GM12878 (cell line): ENCODE measurements at regions of chr3 and their contacts with region 1.

Region 1: DNA sequence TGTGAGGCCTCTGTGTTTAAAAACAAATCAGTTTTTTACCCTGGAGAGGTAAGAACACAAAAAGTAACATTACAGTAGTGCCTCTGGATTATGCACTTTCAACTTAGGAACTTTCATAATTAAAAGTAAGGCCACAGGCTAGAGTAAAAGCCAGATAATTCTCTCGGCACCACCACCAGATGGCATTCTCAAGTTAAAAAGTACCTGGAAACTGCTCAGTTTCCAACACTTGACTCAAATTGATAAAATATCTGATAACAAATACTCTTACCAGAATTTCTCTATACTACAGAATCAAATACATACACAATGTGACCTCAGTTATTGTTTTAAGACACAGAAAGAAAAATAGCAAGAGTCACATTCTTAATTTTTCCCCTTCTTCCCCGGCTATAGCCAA is 19.9 kb downstream of the SPICE1 start:
- DNase-seq: no peak
- ATAC-seq: peak; percentile 96
- H3K4me3 ChIP-seq: no peak overlapping the region
- H3K27ac ChIP-seq: no peak overlapping the region
- H3K4me1 ChIP-seq: no peaks in the 10 kb centered on the region; the same call in 1 of the 2 replicates
- H3K27me3 ChIP-seq: no peaks in the 10 kb centered on the region
- CTCF ChIP-seq: peak; percentile 45 to 67 (median 50); a peak in 4 of 6 replicates
- EP300 ChIP-seq: no peak
- POLR2A ChIP-seq: no peak
- RAD21 ChIP-seq: peak; percentile 71

Region 2: GRCh38 chr3:113249111-113249510 is 245.9 kb before region 1 on chr3:
- CTCF ChIA-PET with region 1: no interaction called
- POLR2A ChIA-PET with region 1: no interaction called
- RAD21 ChIA-PET with region 1: no interaction called
- SMC1A ChIA-PET with region 1: no interaction called
- in situ Hi-C with region 1: no loop called
- intact Hi-C with region 1: no loop called
- DNase-seq: no peak
- ATAC-seq: no peak
- H3K4me3 ChIP-seq: no peak overlapping the region
- H3K27ac ChIP-seq: no peak overlapping the region
- H3K4me1 ChIP-seq: peaks cover under 1% of the 10 kb centered on the region; the same call in 1 of the 2 replicates
- H3K27me3 ChIP-seq: peaks cover 4 to 5% of the 10 kb centered on the region in 2 experiments; a peak in 2 of 4 replicates
- CTCF ChIP-seq: no peak
- EP300 ChIP-seq: no peak
- POLR2A ChIP-seq: no peak
- RAD21 ChIP-seq: no peak

Region 3: GRCh38 chr3:113423699-113424098 is 71.3 kb before region 1 on chr3:
- CTCF ChIA-PET with region 1: no interaction called
- POLR2A ChIA-PET with region 1: no interaction called
- RAD21 ChIA-PET with region 1: no interaction called
- SMC1A ChIA-PET with region 1: no interaction called
- in situ Hi-C with region 1: no loop called
- intact Hi-C with region 1: no loop called
- DNase-seq: peak; percentile 76
- ATAC-seq: peak; percentile 93
- H3K4me3 ChIP-seq: no peak overlapping the region
- H3K27ac ChIP-seq: peak overlapping the region; percentile 61; the same call in 1 of the 2 replicates
- H3K4me1 ChIP-seq: peaks cover 12% of the 10 kb centered on the region
- H3K27me3 ChIP-seq: no peaks in the 10 kb centered on the region
- CTCF ChIP-seq: no peak
- EP300 ChIP-seq: peak; percentile 13 to 53; a peak in 1 of 4 replicates
- POLR2A ChIP-seq: no peak
- RAD21 ChIP-seq: no peak

Region 4: DNA sequence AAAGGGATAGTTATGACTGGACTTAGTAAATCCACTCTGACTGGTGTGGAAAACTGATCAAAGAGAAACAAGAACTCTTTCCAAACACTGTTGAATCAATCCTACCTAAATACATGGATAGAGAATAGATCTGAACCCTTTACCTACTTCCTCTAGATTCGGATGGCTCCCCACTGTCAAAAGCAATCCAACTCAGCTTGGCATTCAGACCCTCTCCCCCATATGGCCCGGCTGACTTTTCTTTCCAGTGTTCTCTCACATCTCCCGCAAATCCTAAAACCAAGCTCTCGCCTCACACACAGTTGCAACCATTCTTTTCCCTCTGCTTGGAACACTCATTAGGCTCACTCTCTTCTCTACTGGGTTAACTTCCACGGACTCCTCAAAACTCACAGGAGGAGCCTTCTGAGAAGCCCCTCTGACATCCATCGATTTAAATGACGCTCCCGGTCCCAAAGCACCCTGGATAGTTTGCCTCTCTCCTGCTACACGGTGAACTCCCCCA is 19.3 kb after region 1 on chr3:
- CTCF ChIA-PET with region 1: interaction called, 69 read pairs
- POLR2A ChIA-PET with region 1: interaction called, 7 read pairs
- RAD21 ChIA-PET with region 1: interaction called, 27 read pairs
- SMC1A ChIA-PET with region 1: interaction called, 39 read pairs
- in situ Hi-C with region 1: no loop called
- intact Hi-C with region 1: no loop called
- DNase-seq: no peak
- ATAC-seq: peak; percentile 9
- H3K4me3 ChIP-seq: peak overlapping the region; percentile 87
- H3K27ac ChIP-seq: peak overlapping the region; percentile 76
- H3K4me1 ChIP-seq: peaks cover 12% of the 10 kb centered on the region
- H3K27me3 ChIP-seq: no peaks in the 10 kb centered on the region
- CTCF ChIP-seq: no peak
- EP300 ChIP-seq: 0 out of 4 replicates have a peak, but pooled peaks of 1 of the 2 experiments have one; percentile 35
- POLR2A ChIP-seq: no peak
- RAD21 ChIP-seq: no peak

Region 5: DNA sequence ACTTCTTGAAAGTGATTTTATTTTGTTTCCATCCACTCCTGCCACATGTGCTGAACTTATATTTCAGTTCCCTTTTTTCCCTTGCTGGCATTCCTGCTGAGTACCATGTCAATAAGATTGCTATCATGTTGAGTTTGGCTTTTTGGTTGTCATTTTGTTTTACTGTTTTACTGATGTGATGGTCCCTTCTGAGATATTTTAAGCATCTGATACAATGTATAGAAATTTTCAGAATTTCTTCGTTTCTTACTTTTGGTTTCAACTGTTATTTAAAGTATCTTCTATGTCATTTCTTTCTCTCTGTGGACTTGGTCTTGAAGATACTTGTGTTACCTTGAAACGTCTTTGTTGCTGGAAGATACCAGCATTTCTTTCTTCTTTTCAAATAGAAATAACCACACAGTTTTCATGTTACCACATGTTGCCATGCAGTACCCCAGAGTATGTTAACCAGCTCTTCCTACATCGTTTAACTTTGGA is 51.4 kb after region 1 on chr3:
- CTCF ChIA-PET with region 1: interaction called, 102 read pairs
- POLR2A ChIA-PET with region 1: interaction called, 8 read pairs
- RAD21 ChIA-PET with region 1: interaction called, 20 read pairs
- SMC1A ChIA-PET with region 1: interaction called, 85 read pairs
- in situ Hi-C with region 1: no loop called
- intact Hi-C with region 1: no loop called
- DNase-seq: peak; percentile 57
- ATAC-seq: peak; percentile 88
- H3K4me3 ChIP-seq: peak overlapping the region; percentile 52; the same call in 1 of the 2 replicates
- H3K27ac ChIP-seq: peak overlapping the region; percentile 76
- H3K4me1 ChIP-seq: peaks cover 26% of the 10 kb centered on the region
- H3K27me3 ChIP-seq: no peaks in the 10 kb centered on the region
- CTCF ChIP-seq: no peak
- EP300 ChIP-seq: 0 out of 4 replicates have a peak, but pooled peaks of 1 of the 2 experiments have one; percentile 39
- POLR2A ChIP-seq: no peak
- RAD21 ChIP-seq: no peak

Region 6: DNA sequence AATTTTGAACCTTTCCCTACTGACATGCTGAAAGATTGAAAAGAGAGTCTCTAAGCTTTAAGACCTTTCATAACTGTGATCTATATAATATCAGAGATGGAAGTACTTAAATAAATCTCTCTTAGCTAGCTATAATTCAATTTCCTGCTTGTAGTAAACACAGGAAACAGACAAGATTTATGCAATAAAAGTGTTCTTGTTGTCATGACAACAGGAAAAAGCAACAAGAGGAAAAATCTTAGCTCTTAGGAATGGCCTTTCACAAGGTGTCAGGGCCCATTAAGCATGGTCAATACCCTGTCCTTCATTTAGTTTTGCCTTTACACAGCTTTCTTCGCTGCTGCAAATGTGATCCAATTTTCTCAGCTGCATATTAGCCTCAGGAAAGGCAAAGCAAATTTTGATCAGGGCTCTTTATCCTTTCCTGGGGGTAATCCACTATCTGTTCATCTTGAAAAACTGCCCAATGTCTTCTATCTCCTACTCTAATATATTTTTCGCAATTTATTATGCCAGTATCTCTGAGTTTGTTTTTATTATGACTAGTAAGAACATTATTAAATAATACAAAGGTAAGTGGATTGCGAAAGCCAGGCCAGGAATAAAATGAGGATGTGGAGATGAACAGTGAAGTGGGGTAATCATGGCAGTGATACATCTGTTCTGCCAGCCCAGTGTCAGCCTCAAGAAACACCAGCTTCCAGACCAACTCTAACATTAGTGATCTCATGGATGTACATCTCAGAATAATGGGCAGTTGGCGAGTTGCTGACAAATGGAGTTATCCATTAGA is 66.0 kb after region 1 on chr3:
- CTCF ChIA-PET with region 1: interaction called, 102 read pairs
- POLR2A ChIA-PET with region 1: no interaction called
- RAD21 ChIA-PET with region 1: interaction called, 5 read pairs
- SMC1A ChIA-PET with region 1: interaction called, 85 read pairs
- in situ Hi-C with region 1: no loop called
- intact Hi-C with region 1: no loop called
- DNase-seq: no peak
- ATAC-seq: no peak
- H3K4me3 ChIP-seq: no peak overlapping the region
- H3K27ac ChIP-seq: no peak overlapping the region
- H3K4me1 ChIP-seq: no peaks in the 10 kb centered on the region; the same call in 1 of the 2 replicates
- H3K27me3 ChIP-seq: no peaks in the 10 kb centered on the region
- CTCF ChIP-seq: no peak
- EP300 ChIP-seq: no peak
- POLR2A ChIP-seq: no peak
- RAD21 ChIP-seq: no peak

Region 7: GRCh38 chr3:113585720-113586119 is 90.7 kb after region 1 on chr3:
- CTCF ChIA-PET with region 1: interaction called, 20 read pairs
- POLR2A ChIA-PET with region 1: no interaction called
- RAD21 ChIA-PET with region 1: interaction called, 6 read pairs
- SMC1A ChIA-PET with region 1: interaction called, 11 read pairs
- in situ Hi-C with region 1: no loop called
- intact Hi-C with region 1: no loop called
- DNase-seq: no peak
- ATAC-seq: no peak
- H3K4me3 ChIP-seq: no peak overlapping the region
- H3K27ac ChIP-seq: no peak overlapping the region
- H3K4me1 ChIP-seq: no peaks in the 10 kb centered on the region
- H3K27me3 ChIP-seq: no peaks in the 10 kb centered on the region
- CTCF ChIP-seq: no peak
- EP300 ChIP-seq: no peak
- POLR2A ChIP-seq: no peak
- RAD21 ChIP-seq: no peak

Region 8: GRCh38 chr3:113626503-113627371 is 131.7 kb after region 1 on chr3:
- CTCF ChIA-PET with region 1: interaction called, 8 read pairs
- POLR2A ChIA-PET with region 1: interaction called, 3 read pairs
- RAD21 ChIA-PET with region 1: no interaction called
- SMC1A ChIA-PET with region 1: interaction called, 5 read pairs
- in situ Hi-C with region 1: no loop called
- intact Hi-C with region 1: loop called (anchors 2 kb)
- DNase-seq: no peak
- ATAC-seq: peak; percentile 90
- H3K4me3 ChIP-seq: no peak overlapping the region
- H3K27ac ChIP-seq: no peak overlapping the region
- H3K4me1 ChIP-seq: peaks cover 8% of the 10 kb centered on the region
- H3K27me3 ChIP-seq: no peaks in the 10 kb centered on the region
- CTCF ChIP-seq: peak; percentile 58 to 64 (median 61)
- EP300 ChIP-seq: no peak
- POLR2A ChIP-seq: no peak
- RAD21 ChIP-seq: peak; percentile 68

Region 9: GRCh38 chr3:113912552-113913236 is 417.7 kb after region 1 on chr3:
- CTCF ChIA-PET with region 1: interaction called, 9 read pairs
- POLR2A ChIA-PET with region 1: no interaction called
- RAD21 ChIA-PET with region 1: interaction called, 4 read pairs
- SMC1A ChIA-PET with region 1: interaction called, 4 read pairs
- in situ Hi-C with region 1: loop called (anchors 10 kb)
- intact Hi-C with region 1: loop called (anchors 2 kb)
- DNase-seq: peak; percentile 35
- ATAC-seq: peak; percentile 98
- H3K4me3 ChIP-seq: no peak overlapping the region
- H3K27ac ChIP-seq: no peak overlapping the region
- H3K4me1 ChIP-seq: no peaks in the 10 kb centered on the region
- H3K27me3 ChIP-seq: no peaks in the 10 kb centered on the region
- CTCF ChIP-seq: peak; percentile 76 to 89 (median 79)
- EP300 ChIP-seq: no peak
- POLR2A ChIP-seq: no peak
- RAD21 ChIP-seq: peak; percentile 95